ENCODE measurements at regions of chr1 and their contacts with region 1.

Region 1: DNA sequence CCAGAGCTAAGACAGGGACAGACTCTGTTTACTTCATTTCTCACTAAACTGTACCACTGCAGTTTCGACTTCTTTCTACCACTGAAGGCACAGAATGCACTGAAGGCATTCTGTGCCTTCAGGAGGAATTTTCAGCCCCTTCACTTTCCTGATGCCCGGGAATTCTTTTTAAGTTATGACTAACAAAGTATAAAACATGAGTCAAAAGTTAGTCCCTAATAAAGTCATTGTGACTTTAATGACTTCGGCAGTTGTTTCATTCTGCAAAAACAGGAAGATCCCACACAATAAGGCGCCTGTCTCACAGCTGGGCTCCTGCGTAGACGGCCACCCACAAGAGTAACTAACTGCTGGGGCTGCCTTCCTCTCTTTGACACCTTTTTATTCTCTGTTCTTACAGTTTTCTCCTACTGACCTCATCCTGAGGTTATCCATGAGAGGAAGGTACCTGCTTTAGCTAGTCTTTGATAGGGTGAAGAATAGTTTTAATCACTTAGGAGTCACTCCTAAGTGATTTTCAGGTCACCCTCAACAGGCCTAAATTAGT is 183.9 kb upstream of the SGIP1 start:
- DNase-seq: peak; percentile 93
- H3K4me3 ChIP-seq: peak overlapping the region in 1 of 3 experiments; percentile 3
- H3K27ac ChIP-seq: peak overlapping the region; percentile 96
- H3K4me1 ChIP-seq: peaks cover 100% of the 10 kb centered on the region
- H3K27me3 ChIP-seq: no peaks in the 10 kb centered on the region
- CTCF ChIP-seq: no peak
- POLR2A ChIP-seq: peak; percentile 14

Region 2: GRCh38 chr1:65958561-65959350 is 391.3 kb before region 1 on chr1:
- CTCF ChIA-PET with region 1: no interaction called
- POLR2A ChIA-PET with region 1: no interaction called
- dilution Hi-C with region 1: no loop called
- intact Hi-C with region 1: loop called (anchors 5 kb)
- DNase-seq: peak; percentile 73
- H3K4me3 ChIP-seq: no peak overlapping the region
- H3K27ac ChIP-seq: no peak overlapping the region
- H3K4me1 ChIP-seq: peaks cover 10% of the 10 kb centered on the region
- H3K27me3 ChIP-seq: no peaks in the 10 kb centered on the region
- CTCF ChIP-seq: peak; percentile 21 to 29
- POLR2A ChIP-seq: no peak

Region 3: GRCh38 chr1:66265796-66266195 is 84.3 kb before region 1 on chr1:
- CTCF ChIA-PET with region 1: interaction called, 3 read pairs
- POLR2A ChIA-PET with region 1: interaction called, 11 read pairs
- dilution Hi-C with region 1: no loop called
- intact Hi-C with region 1: loop called (anchors 1 kb)
- DNase-seq: peak; percentile 83
- H3K4me3 ChIP-seq: no peak overlapping the region
- H3K27ac ChIP-seq: peak overlapping the region; percentile 89
- H3K4me1 ChIP-seq: peaks cover 66% of the 10 kb centered on the region
- H3K27me3 ChIP-seq: no peaks in the 10 kb centered on the region
- CTCF ChIP-seq: no peak
- POLR2A ChIP-seq: no peak

Region 4: GRCh38 chr1:66360285-66360724 is 10.2 kb after region 1 on chr1:
- CTCF ChIA-PET with region 1: interaction called, 11 read pairs
- POLR2A ChIA-PET with region 1: no interaction called
- dilution Hi-C with region 1: no loop called
- intact Hi-C with region 1: no loop called
- DNase-seq: no peak
- H3K4me3 ChIP-seq: no peak overlapping the region
- H3K27ac ChIP-seq: peak overlapping the region; percentile 27
- H3K4me1 ChIP-seq: peaks cover 38% of the 10 kb centered on the region
- H3K27me3 ChIP-seq: no peaks in the 10 kb centered on the region
- CTCF ChIP-seq: no peak
- POLR2A ChIP-seq: no peak

Region 5: GRCh38 chr1:66436378-66437145 is 86.5 kb after region 1 on chr1:
- CTCF ChIA-PET with region 1: interaction called, 6 read pairs
- POLR2A ChIA-PET with region 1: interaction called, 3 read pairs
- dilution Hi-C with region 1: no loop called
- intact Hi-C with region 1: loop called (anchors 1 kb)
- DNase-seq: peak; percentile 46
- H3K4me3 ChIP-seq: no peak overlapping the region
- H3K27ac ChIP-seq: no peak overlapping the region
- H3K4me1 ChIP-seq: peaks cover 34% of the 10 kb centered on the region
- H3K27me3 ChIP-seq: no peaks in the 10 kb centered on the region
- CTCF ChIP-seq: peak; percentile 13 to 31
- POLR2A ChIP-seq: no peak

Region 6: GRCh38 chr1:66563094-66563800 is 213.2 kb after region 1 on chr1:
- CTCF ChIA-PET with region 1: no interaction called
- POLR2A ChIA-PET with region 1: no interaction called
- dilution Hi-C with region 1: no loop called
- intact Hi-C with region 1: loop called (anchors 5 kb)
- DNase-seq: peak; percentile 97
- H3K4me3 ChIP-seq: peak overlapping the region in 1 of 3 experiments; percentile 23
- H3K27ac ChIP-seq: peak overlapping the region; percentile 98
- H3K4me1 ChIP-seq: peaks cover 29% of the 10 kb centered on the region
- H3K27me3 ChIP-seq: no peaks in the 10 kb centered on the region
- CTCF ChIP-seq: no peak
- POLR2A ChIP-seq: peak; percentile 53

Measured in endothelial cell of umbilical vein (primary cell).